ENCODE measurements at regions of chr19 and their contacts with region 1.

Region 1: DNA sequence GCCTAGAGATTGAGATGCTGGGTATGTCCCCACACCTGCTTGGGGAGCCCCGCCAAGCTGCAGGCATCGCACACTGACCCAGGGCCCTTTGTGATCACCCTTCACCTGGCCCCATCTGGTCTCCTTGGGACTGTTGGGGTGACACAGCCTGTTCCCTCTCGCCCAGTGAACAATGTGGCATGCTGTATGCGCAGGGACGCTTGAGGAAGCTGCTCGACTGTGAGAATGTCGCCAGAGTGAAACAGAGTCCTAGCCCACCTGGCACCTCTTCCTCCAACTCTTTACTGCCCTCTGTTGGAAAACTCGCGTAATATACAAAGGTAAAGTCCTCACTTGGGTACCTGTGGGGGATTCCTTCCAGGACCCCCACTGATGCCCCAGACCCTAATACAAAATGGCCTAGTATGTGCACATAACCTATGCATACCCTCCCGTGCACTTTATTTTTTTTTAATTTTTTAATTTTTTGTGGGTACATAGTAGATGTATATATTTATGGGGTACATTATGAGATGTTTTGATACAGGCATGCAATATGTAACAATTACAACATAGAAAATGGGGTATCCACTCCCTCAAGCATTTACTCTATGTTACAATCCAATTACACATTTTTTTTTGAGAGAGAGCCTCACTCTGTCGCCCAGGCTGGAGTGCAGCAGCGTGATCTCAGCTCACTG is 9.0 kb downstream of the BLOC1S3 start:
- DNase-seq: peak in 1 of 10 donors; percentile 26
- H3K4me3 ChIP-seq: no peak overlapping the region
- H3K27ac ChIP-seq: no peak overlapping the region
- H3K27me3 ChIP-seq: no peaks in the 10 kb centered on the region
- CTCF ChIP-seq: peak in 54 of 56 donors; percentile 20 to 62 (median 45)

Region 2: DNA sequence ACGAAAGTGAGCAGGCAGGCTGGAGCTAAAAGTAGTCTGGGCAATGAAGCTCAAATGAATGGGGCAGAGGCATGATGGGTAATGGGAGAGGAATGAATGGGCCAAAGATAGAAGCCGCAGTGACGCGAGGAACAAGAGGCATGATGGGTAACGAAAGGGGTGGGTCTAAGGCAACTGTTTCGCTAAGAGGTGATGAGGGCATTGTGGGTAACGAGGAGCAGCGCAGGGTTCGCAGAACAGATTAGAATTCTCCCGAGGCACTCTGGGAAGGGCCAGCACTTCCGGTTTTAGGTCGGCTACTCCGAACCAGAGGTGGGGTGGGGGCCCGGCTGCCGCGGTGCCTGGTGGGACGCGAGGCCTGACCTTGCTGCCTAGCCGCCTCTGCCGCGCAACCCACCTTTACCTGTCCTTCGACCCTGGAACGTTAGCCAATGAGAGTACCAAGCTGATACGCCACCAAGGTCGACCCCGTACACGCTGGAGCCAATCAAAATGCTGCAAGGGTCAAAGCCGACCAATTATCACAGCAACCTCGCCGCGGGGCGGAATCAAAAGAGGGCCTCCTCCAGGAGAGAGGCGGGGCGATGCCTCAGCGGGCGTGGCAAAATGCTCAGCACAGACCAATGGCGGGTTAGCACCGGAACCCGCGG is 297.1 kb before region 1 on chr19:
- intact Hi-C with region 1: loop called in 1 of 2 experiments (anchors 10 kb)
- DNase-seq: peak in 7 of 10 donors; percentile 99 to 100 (median 100)
- H3K4me3 ChIP-seq: peak overlapping the region; percentile 51 to 99 (median 74)
- H3K27ac ChIP-seq: peak overlapping the region; percentile 58 to 99 (median 93)
- H3K27me3 ChIP-seq: no peaks in the 10 kb centered on the region
- CTCF ChIP-seq: peak in 20 of 56 donors; percentile 7 to 42 (median 24)